Activated naive CD4-positive, alpha-beta T cell treated with anti-CD3 and anti-CD28 coated beads for 36 hours (primary cell): ENCODE measurements at regions of chr6 and their contacts with region 1.

Region 1: GRCh38 chr6:122399384-122400158 is at the start of gene HSF2:
- DNase-seq: peak; percentile 97
- H3K4me3 Mint-ChIP-seq: peak within 1 kb of the TSS; percentile 97
- H3K27ac Mint-ChIP-seq: peak within 1 kb of the TSS; percentile 95
- H3K4me1 Mint-ChIP-seq: peaks cover 42% of the 10 kb centered on the region
- H3K27me3 Mint-ChIP-seq: no peaks in the 10 kb centered on the region
- total RNA-seq, gene HSF2: 22.0 to 27.0 TPM

Region 2: DNA sequence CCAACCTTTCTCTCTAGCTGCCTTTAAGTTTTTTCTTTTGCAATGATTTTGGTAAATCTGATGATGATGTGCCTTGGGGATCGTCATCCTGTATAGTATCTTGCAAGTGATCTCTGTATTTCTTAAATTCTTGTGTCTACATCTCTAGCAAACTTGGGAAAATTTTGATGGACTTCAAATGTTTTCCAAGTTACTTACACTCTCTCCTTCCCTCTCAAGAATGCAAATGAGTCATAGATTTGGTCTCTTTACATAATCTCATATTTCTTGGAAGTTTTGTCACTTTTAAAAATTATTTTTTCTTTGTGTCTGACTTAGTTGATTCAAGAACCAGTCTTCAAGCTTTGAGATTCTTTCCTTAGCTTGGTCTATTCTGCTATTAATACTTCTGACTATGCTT is 1241.7 kb before region 1 on chr6:
- CTCF ChIA-PET with region 1: no interaction called
- intact Hi-C with region 1: no loop called
- DNase-seq: no peak
- H3K4me3 Mint-ChIP-seq: no peak overlapping the region
- H3K27ac Mint-ChIP-seq: no peak overlapping the region
- H3K4me1 Mint-ChIP-seq: no peaks in the 10 kb centered on the region
- H3K27me3 Mint-ChIP-seq: no peaks in the 10 kb centered on the region

Region 3: GRCh38 chr6:121652726-121653623 is 746.6 kb before region 1 on chr6:
- CTCF ChIA-PET with region 1: no interaction called
- intact Hi-C with region 1: loop called (anchors 5 kb)
- DNase-seq: peak; percentile 8
- H3K4me3 Mint-ChIP-seq: no peak overlapping the region
- H3K27ac Mint-ChIP-seq: no peak overlapping the region
- H3K4me1 Mint-ChIP-seq: peaks cover 40% of the 10 kb centered on the region
- H3K27me3 Mint-ChIP-seq: no peaks in the 10 kb centered on the region

Region 4: DNA sequence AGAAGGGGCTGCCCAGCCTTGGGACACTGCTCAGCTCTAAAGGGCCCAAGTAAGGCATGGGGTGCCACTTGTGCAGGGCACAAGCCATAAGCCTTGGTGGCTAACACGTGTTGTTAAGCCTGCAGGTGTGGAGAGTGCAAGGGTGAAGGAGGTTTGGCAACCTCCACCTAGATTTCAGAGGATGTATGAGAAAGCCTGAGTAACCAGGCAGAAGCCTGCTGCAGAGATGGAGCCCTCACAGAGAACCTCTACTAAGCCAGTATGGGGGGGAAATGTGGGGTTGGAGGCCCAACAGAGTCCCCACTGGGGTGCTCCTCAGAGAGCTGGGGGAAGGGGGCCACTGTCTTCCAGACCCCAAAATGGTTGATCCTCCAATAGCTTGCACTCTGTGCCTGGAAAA is 39.4 kb after region 1 on chr6:
- CTCF ChIA-PET with region 1: no interaction called
- intact Hi-C with region 1: no loop called
- DNase-seq: peak; percentile 8
- H3K4me3 Mint-ChIP-seq: no peak overlapping the region
- H3K27ac Mint-ChIP-seq: no peak overlapping the region
- H3K4me1 Mint-ChIP-seq: no peaks in the 10 kb centered on the region
- H3K27me3 Mint-ChIP-seq: no peaks in the 10 kb centered on the region